ENCODE measurements at regions of chr5 and their contacts with region 1.

Region 1: DNA sequence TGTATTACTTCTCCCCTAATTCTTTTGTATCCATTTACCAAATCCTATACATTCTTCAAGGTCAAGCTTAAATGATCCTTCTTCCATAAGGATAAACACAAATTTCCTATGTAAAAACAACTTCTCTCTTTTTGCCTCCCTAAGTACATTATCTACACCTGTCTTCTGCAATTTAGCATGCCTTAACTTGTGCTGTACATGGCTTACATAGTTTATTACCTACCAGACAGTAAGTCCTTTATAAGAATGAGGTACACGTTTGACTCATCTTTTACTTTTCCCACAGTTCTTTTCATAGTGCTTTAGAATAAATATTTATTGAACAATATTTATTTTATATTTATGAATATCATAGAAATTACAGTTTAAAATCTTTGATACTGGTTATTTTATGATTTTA is 33.4 kb downstream of the GIN1 start:
- DNase-seq: no peak
- ATAC-seq: no peak
- H3K4me3 ChIP-seq: no peak overlapping the region
- H3K27ac ChIP-seq: no peak overlapping the region
- H3K4me1 ChIP-seq: no peaks in the 10 kb centered on the region
- H3K27me3 ChIP-seq: no peaks in the 10 kb centered on the region

Region 2: GRCh38 chr5:102845041-102845440 is 241.5 kb before region 1 on chr5:
- intact Hi-C with region 1: no loop called
- DNase-seq: no peak
- ATAC-seq: no peak
- H3K4me3 ChIP-seq: no peak overlapping the region
- H3K27ac ChIP-seq: no peak overlapping the region
- H3K4me1 ChIP-seq: peaks cover 0 to 5% of the 10 kb centered on the region in 2 donors
- H3K27me3 ChIP-seq: no peaks in the 10 kb centered on the region

Region 3: DNA sequence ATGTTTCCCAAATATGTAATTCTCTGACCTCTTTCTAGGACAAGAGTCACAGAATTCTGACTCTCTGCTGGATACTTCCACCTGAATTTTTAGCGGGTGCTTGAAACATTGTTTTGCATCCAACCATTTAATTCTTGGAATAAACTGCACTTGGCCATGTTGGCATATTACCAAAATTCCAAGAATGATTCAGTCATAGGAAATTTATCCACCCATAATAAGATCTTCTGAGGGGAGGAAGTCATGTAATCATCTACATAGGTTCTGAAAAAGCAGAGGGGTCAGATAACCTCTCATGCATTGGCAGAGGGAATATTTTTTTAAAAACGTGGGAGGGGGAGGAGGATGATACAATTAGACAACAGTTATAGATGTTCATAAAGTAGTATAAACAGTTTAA is 174.6 kb before region 1 on chr5:
- intact Hi-C with region 1: no loop called
- DNase-seq: no peak
- ATAC-seq: no peak
- H3K4me3 ChIP-seq: no peak overlapping the region
- H3K27ac ChIP-seq: peak overlapping the region in 1 of 2 donors; percentile 57
- H3K4me1 ChIP-seq: peaks cover 0 to 6% of the 10 kb centered on the region in 2 donors
- H3K27me3 ChIP-seq: no peaks in the 10 kb centered on the region

Region 4: GRCh38 chr5:103066326-103066725 is 20.2 kb before region 1 on chr5:
- intact Hi-C with region 1: no loop called
- DNase-seq: no peak
- ATAC-seq: no peak
- H3K4me3 ChIP-seq: no peak overlapping the region
- H3K27ac ChIP-seq: no peak overlapping the region
- H3K4me1 ChIP-seq: no peaks in the 10 kb centered on the region
- H3K27me3 ChIP-seq: no peaks in the 10 kb centered on the region

Region 5: GRCh38 chr5:103139264-103139865 is 52.8 kb after region 1 on chr5:
- intact Hi-C with region 1: loop called in 1 of 2 experiments (anchors 10 kb)
- DNase-seq: peak; percentile 76 to 81
- ATAC-seq: peak; percentile 92
- H3K4me3 ChIP-seq: no peak overlapping the region
- H3K27ac ChIP-seq: no peak overlapping the region
- H3K4me1 ChIP-seq: no peaks in the 10 kb centered on the region
- H3K27me3 ChIP-seq: no peaks in the 10 kb centered on the region

Region 6: GRCh38 chr5:103224118-103224893 is 137.8 kb after region 1 on chr5:
- intact Hi-C with region 1: no loop called
- DNase-seq: no peak
- ATAC-seq: peak; percentile 80
- H3K4me3 ChIP-seq: no peak overlapping the region
- H3K27ac ChIP-seq: no peak overlapping the region
- H3K4me1 ChIP-seq: no peaks in the 10 kb centered on the region
- H3K27me3 ChIP-seq: no peaks in the 10 kb centered on the region